Panc1 (cell line): ENCODE measurements at regions of chr5 and their contacts with region 1.

Region 1: GRCh38 chr5:126628102-126628501 is 27.4 kb downstream of the PHAX start:
- DNase-seq: no peak
- ATAC-seq: no peak
- H3K4me3 ChIP-seq: no peak overlapping the region
- H3K27ac ChIP-seq: no peak overlapping the region
- H3K4me1 ChIP-seq: peaks cover 4% of the 10 kb centered on the region; the same call in 1 of the 2 replicates
- H3K27me3 ChIP-seq: no peaks in the 10 kb centered on the region
- CTCF ChIP-seq: no peak

Region 2: DNA sequence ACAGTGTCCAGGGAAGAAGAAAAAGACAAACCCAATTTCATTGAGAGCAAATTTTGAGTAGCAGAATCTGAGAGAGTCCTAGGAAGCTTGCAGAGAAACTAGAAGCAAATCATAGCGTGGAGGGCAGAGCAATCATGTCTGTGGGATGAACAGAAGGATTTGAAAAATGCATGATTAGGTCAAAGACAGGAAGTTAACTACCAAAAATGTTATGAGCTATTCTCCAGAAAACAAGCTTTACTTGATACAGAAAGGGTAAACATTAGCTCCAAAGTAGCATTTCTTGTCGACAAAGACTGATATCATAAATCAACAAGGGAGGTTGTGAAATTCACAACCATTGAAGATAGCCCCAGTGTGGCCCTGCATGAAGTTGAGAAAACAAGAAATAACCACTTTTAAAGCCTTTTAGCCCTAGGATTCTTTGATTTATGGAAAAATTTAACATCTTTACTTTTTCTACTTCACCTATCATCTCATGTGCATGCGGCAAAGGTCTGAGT is 564.8 kb after region 1 on chr5:
- CTCF ChIA-PET with region 1: no interaction called
- POLR2A ChIA-PET with region 1: interaction called, 12 read pairs
- in situ Hi-C with region 1: no loop called
- intact Hi-C with region 1: no loop called
- DNase-seq: no peak
- ATAC-seq: no peak
- H3K4me3 ChIP-seq: no peak overlapping the region
- H3K27ac ChIP-seq: no peak overlapping the region
- H3K4me1 ChIP-seq: no peaks in the 10 kb centered on the region
- H3K27me3 ChIP-seq: peaks cover 2% of the 10 kb centered on the region
- CTCF ChIP-seq: no peak